ENCODE measurements at regions of chr18 and their contacts with region 1.

Region 1: GRCh38 chr18:9575558-9575957 is 38.8 kb downstream of the PPP4R1 start:
- DNase-seq: peak; percentile 83 to 86
- H3K4me3 ChIP-seq: no peak overlapping the region
- H3K27ac ChIP-seq: peak overlapping the region in 1 of 2 donors; percentile 22
- H3K4me1 ChIP-seq: peaks cover 0 to 6% (median 0%) of the 10 kb centered on the region in 4 donors
- H3K27me3 ChIP-seq: no peaks in the 10 kb centered on the region
- CTCF ChIP-seq: peak; percentile 83 to 85

Region 2: DNA sequence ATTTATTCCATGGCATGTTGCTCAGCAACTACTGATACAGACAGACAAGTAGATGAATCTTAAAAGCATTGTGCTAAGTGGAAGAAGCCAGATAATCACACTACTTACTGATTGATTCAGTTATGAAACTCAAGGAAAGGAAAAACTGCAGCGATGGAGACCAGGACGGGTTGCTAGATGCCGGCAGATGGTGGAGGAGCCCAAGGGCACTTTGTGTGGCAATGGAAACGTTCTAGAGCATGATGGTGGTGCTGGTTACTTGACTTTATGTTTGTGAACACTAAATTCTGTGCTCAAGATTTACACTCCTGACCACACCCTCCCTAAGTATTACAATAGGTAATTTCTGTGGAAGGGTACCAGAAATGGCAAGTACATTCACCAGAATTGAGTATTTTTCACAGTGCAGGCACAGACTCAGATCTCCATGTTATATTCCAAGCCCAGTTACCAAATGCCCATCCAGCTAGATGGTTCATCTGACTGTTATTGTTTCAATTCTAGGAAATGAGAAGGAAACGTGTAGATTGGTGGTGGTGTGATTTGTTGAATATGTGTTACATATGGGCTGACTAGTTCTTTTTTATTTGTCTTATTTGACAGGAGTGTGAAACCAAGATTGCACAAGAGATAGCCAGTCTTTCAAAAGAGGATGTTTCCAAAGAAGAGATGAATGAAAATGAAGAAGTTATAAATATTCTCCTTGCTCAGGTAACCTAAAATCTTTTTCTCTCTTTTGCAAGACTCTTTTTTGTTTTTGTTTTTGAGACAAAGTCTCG is 45.1 kb before region 1 on chr18:
- intact Hi-C with region 1: no loop called
- DNase-seq: no peak
- H3K4me3 ChIP-seq: no peak overlapping the region
- H3K27ac ChIP-seq: no peak overlapping the region
- H3K4me1 ChIP-seq: peaks cover 0 to 9% (median 6%) of the 10 kb centered on the region in 4 donors
- H3K27me3 ChIP-seq: no peaks in the 10 kb centered on the region
- CTCF ChIP-seq: no peak

Region 3: GRCh38 chr18:9683407-9684396 is 108.1 kb after region 1 on chr18:
- intact Hi-C with region 1: loop called (anchors 10 kb)
- DNase-seq: peak; percentile 67 to 73
- H3K4me3 ChIP-seq: no peak overlapping the region
- H3K27ac ChIP-seq: peak overlapping the region; percentile 66 to 73
- H3K4me1 ChIP-seq: peaks cover 0 to 26% (median 16%) of the 10 kb centered on the region in 4 donors
- H3K27me3 ChIP-seq: no peaks in the 10 kb centered on the region
- CTCF ChIP-seq: peak; percentile 36 to 49

Region 4: DNA sequence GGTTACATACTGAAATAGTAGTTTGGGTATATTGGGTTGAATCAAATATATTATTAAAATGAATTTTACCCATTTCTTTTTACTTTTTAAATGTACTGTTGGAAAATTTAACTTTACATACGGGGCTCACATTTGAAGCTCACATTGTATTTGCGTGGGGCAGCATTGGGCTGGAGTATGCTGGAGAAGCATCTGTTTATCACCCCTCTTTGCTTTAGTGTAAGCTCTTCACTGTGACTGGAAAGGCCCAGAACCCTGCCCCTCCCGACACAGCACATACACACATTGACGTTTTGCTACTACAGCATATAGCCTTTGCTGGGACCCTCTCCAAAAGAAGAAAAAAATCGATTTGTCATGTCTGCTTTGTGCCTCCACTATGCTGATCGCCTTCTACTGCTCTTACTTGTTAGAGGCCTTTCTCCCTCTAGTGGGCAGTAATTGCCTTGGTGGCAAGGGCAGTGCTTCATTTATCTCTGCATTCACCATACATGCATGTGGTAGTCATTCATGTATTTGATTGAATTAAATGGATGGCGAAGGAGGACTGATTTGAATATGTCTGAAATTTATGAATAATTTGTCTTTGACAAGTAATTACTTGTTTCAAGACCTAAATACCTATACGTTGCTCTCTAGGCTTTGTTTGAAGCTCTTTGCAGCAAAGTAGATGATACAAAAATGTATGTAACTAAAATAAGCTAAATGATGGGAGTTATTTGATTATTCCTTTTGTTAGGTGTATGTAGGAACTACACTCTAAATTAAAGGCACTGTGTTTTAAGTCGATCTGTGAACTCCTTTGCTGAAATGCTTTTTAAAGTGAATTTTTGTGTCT is 375.7 kb after region 1 on chr18:
- intact Hi-C with region 1: loop called (anchors 10 kb)
- DNase-seq: no peak
- H3K4me3 ChIP-seq: no peak overlapping the region
- H3K27ac ChIP-seq: no peak overlapping the region
- H3K4me1 ChIP-seq: peaks cover 0 to 16% (median 2%) of the 10 kb centered on the region in 4 donors
- H3K27me3 ChIP-seq: no peaks in the 10 kb centered on the region
- CTCF ChIP-seq: peak; percentile 53 to 59

Measured in tibial artery (tissue), 4 donors.